HepG2 (cell line): ENCODE measurements at regions of chr15 and their contacts with region 1.

Region 1: GRCh38 chr15:92383519-92384326 is 10.0 kb upstream of the ST8SIA2 start:
- DNase-seq: peak; percentile 15
- ATAC-seq: peak; percentile 68
- H3K4me3 ChIP-seq: no peak overlapping the region
- H3K27ac ChIP-seq: no peak overlapping the region
- H3K4me1 ChIP-seq: no peaks in the 10 kb centered on the region
- H3K27me3 ChIP-seq: peaks cover 0 to 26% of the 10 kb centered on the region in 2 experiments; a peak in 2 of 5 replicates
- CTCF ChIP-seq: peak; percentile 71
- EP300 ChIP-seq: no peak
- POLR2A ChIP-seq: no peak
- RAD21 ChIP-seq: peak; percentile 40; the same call in 1 of the 2 replicates

Region 2: DNA sequence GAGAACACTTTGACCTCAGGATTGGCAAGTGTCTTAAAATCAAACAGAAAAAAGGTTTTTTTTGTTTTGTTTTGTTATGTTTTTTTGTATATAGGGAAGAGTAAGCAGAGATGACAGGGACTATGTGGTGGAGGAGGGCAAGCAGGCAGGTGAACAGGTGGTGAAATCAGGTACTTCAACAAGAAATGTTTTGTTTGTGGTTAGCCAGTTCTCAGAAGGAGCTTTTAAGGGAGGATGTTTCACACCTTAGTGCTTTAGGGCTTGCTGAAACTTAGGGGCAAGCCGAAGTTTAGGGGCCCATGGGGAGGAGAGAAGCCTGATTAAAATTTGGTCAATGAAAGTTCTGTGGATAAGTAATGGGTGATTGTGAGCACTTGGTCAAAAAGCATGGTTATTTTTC is 900.9 kb before region 1 on chr15:
- CTCF ChIA-PET with region 1: no interaction called
- POLR2A ChIA-PET with region 1: no interaction called
- in situ Hi-C with region 1: no loop called
- intact Hi-C with region 1: no loop called
- DNase-seq: no peak
- ATAC-seq: no peak
- H3K4me3 ChIP-seq: no peak overlapping the region
- H3K27ac ChIP-seq: no peak overlapping the region
- H3K4me1 ChIP-seq: no peaks in the 10 kb centered on the region
- H3K27me3 ChIP-seq: 0 out of 5 replicates have a peak, but pooled peaks cover 0 to 3% of the 10 kb centered on the region in 2 experiments
- CTCF ChIP-seq: no peak
- EP300 ChIP-seq: no peak
- POLR2A ChIP-seq: no peak
- RAD21 ChIP-seq: no peak

Region 3: GRCh38 chr15:92091155-92091734 is 292.5 kb before region 1 on chr15:
- CTCF ChIA-PET with region 1: interaction called, 7 read pairs
- POLR2A ChIA-PET with region 1: no interaction called
- in situ Hi-C with region 1: loop called (anchors 5 kb)
- intact Hi-C with region 1: no loop called
- DNase-seq: peak; percentile 28
- ATAC-seq: peak; percentile 94
- H3K4me3 ChIP-seq: no peak overlapping the region
- H3K27ac ChIP-seq: no peak overlapping the region
- H3K4me1 ChIP-seq: no peaks in the 10 kb centered on the region
- H3K27me3 ChIP-seq: peaks cover 0 to 10% of the 10 kb centered on the region in 2 experiments; a peak in 1 of 5 replicates
- CTCF ChIP-seq: peak; percentile 84
- EP300 ChIP-seq: no peak
- POLR2A ChIP-seq: no peak
- RAD21 ChIP-seq: peak; percentile 57

Region 4: DNA sequence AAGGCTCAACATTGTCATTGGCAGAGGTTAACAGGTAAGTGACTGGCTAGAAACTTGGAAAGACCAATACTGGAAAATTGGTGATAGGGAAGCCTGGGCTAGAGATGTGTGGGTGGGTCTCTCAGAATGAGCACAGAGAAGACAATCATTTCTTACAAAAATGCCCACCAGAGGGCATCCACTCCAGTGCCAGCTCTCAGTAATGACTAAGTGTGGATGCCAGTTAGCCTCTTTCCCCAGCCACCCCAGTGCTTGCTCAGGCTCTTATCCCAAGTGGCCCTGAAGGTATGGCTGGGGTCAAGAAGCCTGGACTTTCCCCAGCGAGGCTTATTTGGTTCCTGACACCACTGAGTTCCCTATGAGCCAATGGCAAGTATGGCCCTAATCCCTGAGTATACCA is 105.9 kb before region 1 on chr15:
- CTCF ChIA-PET with region 1: no interaction called
- POLR2A ChIA-PET with region 1: no interaction called
- in situ Hi-C with region 1: no loop called
- intact Hi-C with region 1: loop called (anchors 1 kb)
- DNase-seq: no peak
- ATAC-seq: peak; percentile 52
- H3K4me3 ChIP-seq: no peak overlapping the region
- H3K27ac ChIP-seq: no peak overlapping the region
- H3K4me1 ChIP-seq: no peaks in the 10 kb centered on the region
- H3K27me3 ChIP-seq: no peaks in the 10 kb centered on the region
- CTCF ChIP-seq: no peak
- EP300 ChIP-seq: no peak
- POLR2A ChIP-seq: no peak
- RAD21 ChIP-seq: no peak

Region 5: DNA sequence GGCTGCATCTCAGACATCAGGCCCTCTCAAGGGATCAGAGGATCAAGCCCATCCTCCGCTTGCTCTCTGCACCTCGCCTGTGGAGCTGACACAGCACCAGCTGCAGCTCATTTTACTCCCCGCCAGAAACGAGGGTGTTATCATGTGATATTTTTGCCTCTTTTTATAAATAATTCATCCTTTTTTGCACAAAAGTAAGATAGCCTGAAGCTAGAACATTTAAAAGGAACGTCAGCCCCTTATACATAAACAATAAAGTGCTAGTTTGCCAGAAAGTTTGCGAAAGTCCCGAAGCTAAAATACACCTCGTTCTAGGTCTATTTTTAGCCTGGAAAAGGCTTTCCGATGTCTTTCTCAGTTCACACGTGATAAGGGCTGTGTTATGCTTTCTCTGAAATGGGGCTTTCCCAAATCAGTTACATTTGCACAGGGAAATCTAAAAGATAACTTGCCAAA is 281.4 kb after region 1 on chr15:
- CTCF ChIA-PET with region 1: no interaction called
- POLR2A ChIA-PET with region 1: no interaction called
- in situ Hi-C with region 1: no loop called
- intact Hi-C with region 1: no loop called
- DNase-seq: no peak
- ATAC-seq: no peak
- H3K4me3 ChIP-seq: no peak overlapping the region
- H3K27ac ChIP-seq: no peak overlapping the region
- H3K4me1 ChIP-seq: peaks cover 20% of the 10 kb centered on the region
- H3K27me3 ChIP-seq: peaks cover 0 to 31% of the 10 kb centered on the region in 2 experiments; a peak in 4 of 5 replicates
- CTCF ChIP-seq: no peak
- EP300 ChIP-seq: no peak
- POLR2A ChIP-seq: no peak
- RAD21 ChIP-seq: no peak